ACHN (cell line): ENCODE measurements at regions of chr6 and their contacts with region 1.

Region 1: GRCh38 chr6:72622094-72622940 is 453 bp downstream of the KCNQ5 start:
- DNase-seq: peak; percentile 59

Region 2: GRCh38 chr6:73129653-73130443 is 507.5 kb after region 1 on chr6:
- in situ Hi-C with region 1: loop called (anchors 25 kb)
- DNase-seq: peak; percentile 68